Gastrocnemius medialis (tissue), 4 donors: ENCODE measurements at regions of chr14 and their contacts with region 1.

Region 1: DNA sequence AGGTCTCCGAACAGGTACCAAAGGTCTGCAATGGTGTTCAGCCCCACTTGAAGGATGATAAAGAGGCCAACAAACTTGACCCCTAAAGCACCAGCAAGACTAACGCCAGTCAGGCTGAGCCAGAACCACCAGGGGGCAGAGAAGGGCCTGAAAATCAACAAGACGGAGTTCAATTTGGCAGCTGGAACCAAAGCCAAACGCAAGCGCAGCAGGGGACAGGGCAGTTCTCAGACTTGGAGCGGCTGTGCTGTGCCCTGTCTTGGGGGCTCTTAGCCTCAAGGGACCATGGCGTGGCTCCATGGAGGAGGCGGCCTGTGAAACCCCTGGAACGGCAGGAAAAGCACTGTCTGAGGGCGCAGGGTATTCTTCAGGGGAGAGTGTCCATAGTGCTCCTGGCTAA is 19.6 kb downstream of the POMT2 start:
- DNase-seq: peak; percentile 82 to 87
- ATAC-seq: peak; percentile 65 to 73
- H3K4me3 ChIP-seq: peak overlapping the region in 1 of 4 donors; percentile 13
- H3K27ac ChIP-seq: peak overlapping the region; percentile 24 to 97 (median 96)
- H3K4me1 ChIP-seq: peaks cover 46 to 52% of the 10 kb centered on the region in 2 donors
- H3K27me3 ChIP-seq: no peaks in the 10 kb centered on the region
- CTCF ChIP-seq: peak; percentile 80 to 95 (median 86)
- POLR2A ChIP-seq: no peak

Region 2: DNA sequence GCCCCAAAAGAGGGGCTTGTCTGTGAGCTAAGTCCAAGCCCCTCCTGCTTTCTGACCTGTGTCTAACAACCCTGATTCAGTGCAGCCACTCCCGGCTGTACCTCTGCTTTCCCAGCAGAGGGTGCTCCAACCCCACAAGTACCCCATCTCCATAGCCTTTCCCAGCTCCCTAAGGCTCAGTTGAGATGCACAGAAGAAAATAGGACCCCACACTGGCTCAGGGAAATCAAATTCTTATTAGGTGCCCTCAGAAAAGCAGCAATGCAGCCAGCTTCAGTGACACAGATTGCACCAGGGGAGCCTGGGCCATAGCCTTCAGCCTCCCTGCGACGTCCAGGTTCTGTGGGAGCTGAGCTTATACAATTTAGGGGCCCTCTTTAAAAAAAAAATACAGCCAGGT is 425.0 kb before region 1 on chr14:
- in situ Hi-C with region 1: loop called in 1 of 4 experiments (anchors 25 kb)
- intact Hi-C with region 1: loop called (anchors 5 kb)
- DNase-seq: peak; percentile 31 to 51
- ATAC-seq: peak; percentile 84 to 87
- H3K4me3 ChIP-seq: no peak overlapping the region
- H3K27ac ChIP-seq: no peak overlapping the region
- H3K4me1 ChIP-seq: no peaks in the 10 kb centered on the region
- H3K27me3 ChIP-seq: no peaks in the 10 kb centered on the region
- CTCF ChIP-seq: peak; percentile 86 to 95 (median 90)
- POLR2A ChIP-seq: no peak

Region 3: DNA sequence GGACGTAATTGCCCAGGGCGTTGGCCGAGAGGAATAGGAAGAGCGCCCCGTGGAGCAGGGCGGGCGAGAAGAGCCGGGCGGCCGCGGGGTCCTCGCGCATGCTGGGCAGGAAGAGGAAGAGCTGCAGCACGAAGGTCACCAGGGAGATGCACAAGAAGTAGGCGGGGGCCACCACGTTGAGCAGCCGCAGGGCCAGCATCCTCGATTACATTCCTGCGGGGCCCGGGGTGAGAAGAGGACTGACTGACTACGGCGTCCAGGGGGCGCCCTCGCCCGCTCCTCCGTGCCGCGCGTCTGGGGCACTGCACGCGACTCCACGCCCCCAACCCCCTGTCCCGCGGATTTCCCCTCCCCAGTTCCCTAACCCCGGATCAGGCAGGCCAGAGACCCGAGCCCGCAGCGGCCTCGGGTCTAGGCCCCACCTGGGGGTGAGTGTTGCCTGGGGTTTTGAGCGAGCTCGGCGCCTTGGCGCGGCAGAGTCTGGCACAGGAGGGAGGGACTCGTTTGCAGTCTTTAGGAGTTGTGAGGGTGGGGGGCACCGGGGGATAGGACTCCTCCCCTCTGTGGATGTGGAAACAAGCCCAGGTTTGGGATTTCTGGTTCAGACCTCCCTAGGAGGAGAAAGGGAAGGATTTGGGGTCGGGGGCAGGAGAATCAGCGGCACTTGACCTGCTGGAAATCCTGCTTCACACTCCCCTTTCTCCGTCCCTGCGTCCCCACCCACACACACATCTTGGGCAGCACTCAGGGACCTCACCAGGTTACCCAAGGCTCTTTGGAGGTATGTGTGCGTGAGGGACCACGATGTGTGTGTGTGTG is 161.4 kb before region 1 on chr14:
- in situ Hi-C with region 1: no loop called
- intact Hi-C with region 1: loop called (anchors 5 kb)
- DNase-seq: no peak
- ATAC-seq: peak in 1 of 2 donors; percentile 32
- H3K4me3 ChIP-seq: peak overlapping the region; percentile 32 to 54 (median 44)
- H3K27ac ChIP-seq: no peak overlapping the region
- H3K4me1 ChIP-seq: peaks cover 10 to 23% of the 10 kb centered on the region in 2 donors
- H3K27me3 ChIP-seq: peaks cover 52 to 65% (median 62%) of the 10 kb centered on the region in 3 donors
- CTCF ChIP-seq: peak in 3 of 5 experiments; percentile 35 to 48 (median 37)
- POLR2A ChIP-seq: no peak

Region 4: GRCh38 chr14:77376771-77377501 is 75.8 kb after region 1 on chr14 and contains the starts of genes SAMD15 and TMED8:
- in situ Hi-C with region 1: no loop called
- intact Hi-C with region 1: loop called (anchors 5 kb)
- DNase-seq: peak; percentile 43 to 68
- ATAC-seq: peak; percentile 97 to 98
- H3K4me3 ChIP-seq: peak within 1 kb of the TSS; percentile 85 to 99 (median 86)
- H3K27ac ChIP-seq: peak within 1 kb of the TSS; percentile 64 to 76 (median 74)
- H3K4me1 ChIP-seq: peaks cover 11 to 12% of the 10 kb centered on the region in 2 donors
- H3K27me3 ChIP-seq: no peaks in the 10 kb centered on the region
- CTCF ChIP-seq: peak in 3 of 5 experiments; percentile 26 to 53 (median 50)
- POLR2A ChIP-seq: no peak
- total RNA-seq, gene SAMD15: 0.11 TPM in 1 of 4 donors, not detected in the others
- total RNA-seq, gene TMED8: 3.0 to 5.2 (median 4.3) TPM